Activated CD4-positive, alpha-beta T cell treated with anti-CD3 and anti-CD28 coated beads for 36 hours (primary cell): ENCODE measurements at regions of chr4 and their contacts with region 1.

Region 1: DNA sequence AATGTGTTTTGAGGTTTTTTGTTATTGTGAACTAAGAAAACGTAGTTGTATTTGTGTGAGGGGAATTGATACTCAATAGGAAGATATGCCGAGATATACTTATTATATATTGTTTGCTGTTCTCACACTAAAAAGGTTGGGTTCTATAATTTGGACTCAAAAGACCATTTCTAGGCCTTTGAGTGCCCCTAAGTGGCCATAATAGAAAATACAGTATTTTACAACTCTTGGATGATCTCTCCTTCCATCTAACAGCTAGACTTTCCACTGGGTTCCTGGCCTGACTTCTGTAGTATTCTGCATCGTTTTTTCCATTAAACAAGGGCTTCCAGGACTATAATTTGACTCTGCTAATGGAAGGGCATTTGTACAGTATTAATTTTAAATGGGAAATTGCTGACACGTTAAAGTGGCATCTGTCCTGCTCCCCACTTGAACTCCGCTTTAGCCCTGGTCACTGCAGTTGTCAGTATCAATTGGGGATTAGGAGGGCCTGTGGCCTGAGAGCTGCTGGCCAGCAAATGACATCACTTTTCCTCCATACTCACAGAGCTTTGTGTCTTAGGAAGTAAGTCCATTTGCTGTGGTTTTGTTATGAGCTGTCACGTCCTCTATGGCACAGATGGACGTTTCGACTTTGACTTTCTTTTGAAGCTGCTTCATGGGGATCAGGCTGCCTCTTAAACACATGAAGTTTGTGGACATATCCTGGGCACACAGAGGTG is 176.9 kb downstream of the SLIT2 start:
- DNase-seq: no peak
- ATAC-seq: no peak
- H3K4me3 Mint-ChIP-seq: no peak overlapping the region
- H3K27ac Mint-ChIP-seq: no peak overlapping the region
- H3K4me1 Mint-ChIP-seq: no peaks in the 10 kb centered on the region
- H3K27me3 Mint-ChIP-seq: peaks cover 2% of the 10 kb centered on the region

Region 2: DNA sequence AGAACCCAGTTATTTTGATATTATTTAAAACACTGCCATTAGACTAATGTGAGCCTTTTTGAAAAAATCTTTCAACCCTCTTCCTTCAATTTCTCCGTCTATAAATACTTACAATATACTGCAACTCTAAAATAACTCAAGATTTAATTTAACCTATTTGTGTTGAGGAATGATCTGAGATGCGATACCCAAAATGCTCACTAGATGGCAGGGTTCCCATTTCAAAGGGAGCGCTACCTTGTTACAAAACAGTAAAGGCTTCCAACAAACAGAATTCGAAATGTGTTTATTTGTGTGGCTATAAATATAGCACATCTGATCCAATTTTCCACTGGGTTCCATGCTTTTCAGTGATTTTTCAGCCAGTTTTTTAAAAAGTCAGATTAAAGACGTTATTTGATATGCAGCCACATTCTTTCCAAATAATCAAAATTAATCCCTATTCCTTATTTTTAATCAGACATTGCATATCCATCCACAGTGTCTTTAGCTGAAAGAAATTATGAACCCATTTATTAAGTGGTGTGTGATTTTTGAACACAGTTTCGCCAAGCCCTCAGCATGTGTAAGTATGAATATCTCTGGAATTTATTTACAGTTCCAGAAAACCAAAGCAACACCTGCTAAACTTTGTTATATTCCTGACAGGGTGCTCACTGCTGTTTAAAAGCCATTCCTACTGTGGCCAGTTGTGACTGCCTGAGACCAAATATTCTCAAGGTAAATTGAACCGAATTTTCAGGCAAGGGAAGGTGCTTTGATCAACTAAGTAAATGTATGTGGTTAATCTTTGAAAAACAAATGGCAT is 1739.1 kb before region 1 on chr4:
- CTCF ChIA-PET with region 1: no interaction called
- POLR2A ChIA-PET with region 1: no interaction called
- intact Hi-C with region 1: loop called (anchors 2 to 5 kb)
- DNase-seq: peak; percentile 61
- ATAC-seq: no peak
- H3K4me3 Mint-ChIP-seq: no peak overlapping the region
- H3K27ac Mint-ChIP-seq: no peak overlapping the region
- H3K4me1 Mint-ChIP-seq: no peaks in the 10 kb centered on the region
- H3K27me3 Mint-ChIP-seq: peaks cover 9% of the 10 kb centered on the region